T-cell (primary cell): ENCODE measurements at regions of chr14 and their contacts with region 1.

Region 1: DNA sequence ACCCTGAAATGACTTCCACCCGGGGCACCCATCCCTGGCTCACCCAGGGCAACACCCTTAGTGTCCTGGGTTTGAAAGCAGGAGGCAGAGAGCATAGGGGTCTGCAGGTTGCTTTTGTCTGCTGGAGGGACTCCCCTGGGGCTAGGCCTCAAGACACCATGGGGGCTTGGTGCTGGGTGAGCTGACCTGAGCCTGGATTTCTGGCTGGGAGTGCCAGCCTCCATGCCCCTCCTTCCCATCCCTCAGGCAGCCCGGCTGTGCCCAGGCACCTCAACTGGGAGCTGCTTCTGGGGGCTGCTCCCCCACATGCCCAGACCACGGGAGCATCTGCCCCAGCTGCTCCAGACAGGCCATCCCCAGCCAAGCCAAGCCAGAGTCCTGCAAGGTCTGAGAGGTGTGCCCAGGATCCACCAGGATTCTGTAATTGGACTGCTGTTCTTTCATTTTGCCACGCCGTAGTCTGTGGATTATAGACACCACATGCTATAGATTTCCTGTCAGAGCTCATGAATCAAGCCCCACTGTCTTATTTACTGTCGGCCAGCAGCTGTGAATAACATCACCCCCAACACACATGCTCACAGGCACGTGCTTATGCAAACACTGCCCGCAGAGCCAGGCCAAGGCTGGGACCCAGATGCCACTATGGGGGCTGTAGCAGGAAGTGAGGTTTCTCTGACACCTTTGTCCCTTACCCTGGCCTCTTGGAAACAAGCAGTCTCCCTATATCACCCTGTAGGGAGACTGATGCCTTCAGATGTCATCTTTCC is 29.4 kb upstream of the ESRRB start:
- DNase-seq: no peak
- ATAC-seq: no peak
- H3K4me3 ChIP-seq: no peak overlapping the region
- H3K4me3 Mint-ChIP-seq: no peak overlapping the region
- H3K27ac ChIP-seq: no peak overlapping the region
- H3K27ac Mint-ChIP-seq: no peak overlapping the region
- H3K4me1 ChIP-seq: no peaks in the 10 kb centered on the region
- H3K4me1 Mint-ChIP-seq: no peaks in the 10 kb centered on the region
- H3K27me3 ChIP-seq: peaks cover 0 to 16% of the 10 kb centered on the region in 2 experiments
- H3K27me3 Mint-ChIP-seq: peaks cover 11 to 24% of the 10 kb centered on the region in 2 donors

Region 2: DNA sequence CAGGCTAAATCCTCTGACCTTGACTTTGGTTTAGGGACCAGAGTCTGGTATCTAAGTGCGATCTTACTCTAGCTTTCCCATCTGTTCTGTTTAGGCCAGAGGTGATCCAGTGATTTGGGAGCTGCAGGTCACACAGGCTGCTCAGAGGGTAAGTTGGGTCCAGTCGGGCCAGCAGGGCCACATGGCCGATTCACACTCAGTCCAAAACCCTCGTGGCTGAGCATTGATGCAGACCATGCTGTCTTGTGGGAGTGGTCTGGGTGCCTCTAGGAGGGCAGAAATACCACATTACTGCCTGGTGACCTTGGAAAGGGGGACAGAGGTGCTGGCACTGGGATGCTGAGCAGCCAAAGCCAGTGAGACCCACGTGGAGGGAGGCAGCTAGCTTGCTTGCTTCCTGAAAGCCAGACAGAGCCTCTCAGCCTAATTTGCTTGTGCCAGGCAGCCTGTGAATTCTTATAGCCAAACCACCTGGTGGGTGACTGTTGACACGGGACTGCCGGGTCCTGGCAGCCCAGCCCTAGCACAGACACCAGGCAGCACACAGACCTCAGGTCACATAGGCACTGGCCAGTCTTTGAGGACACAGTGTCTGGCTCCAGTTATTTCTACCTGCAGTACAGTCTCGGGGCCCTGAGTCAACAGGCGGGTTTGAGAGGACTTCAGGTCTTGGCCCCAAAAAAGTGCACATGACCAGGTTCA is 61.0 kb after region 1 on chr14:
- CTCF ChIA-PET with region 1: interaction called in 1 of 2 experiments, 10 read pairs
- POLR2A ChIA-PET with region 1: no interaction called
- DNase-seq: no peak
- ATAC-seq: no peak
- H3K4me3 ChIP-seq: no peak overlapping the region
- H3K4me3 Mint-ChIP-seq: no peak overlapping the region
- H3K27ac ChIP-seq: no peak overlapping the region
- H3K27ac Mint-ChIP-seq: no peak overlapping the region
- H3K4me1 ChIP-seq: no peaks in the 10 kb centered on the region
- H3K4me1 Mint-ChIP-seq: no peaks in the 10 kb centered on the region
- H3K27me3 ChIP-seq: peaks cover 0 to 25% of the 10 kb centered on the region in 2 experiments
- H3K27me3 Mint-ChIP-seq: peaks cover 23 to 26% of the 10 kb centered on the region in 2 donors